Activated CD4-positive, alpha-beta T cell treated with anti-CD3 and anti-CD28 coated beads for 36 hours (primary cell): ENCODE measurements at regions of chr7 and their contacts with region 1.

Region 1: DNA sequence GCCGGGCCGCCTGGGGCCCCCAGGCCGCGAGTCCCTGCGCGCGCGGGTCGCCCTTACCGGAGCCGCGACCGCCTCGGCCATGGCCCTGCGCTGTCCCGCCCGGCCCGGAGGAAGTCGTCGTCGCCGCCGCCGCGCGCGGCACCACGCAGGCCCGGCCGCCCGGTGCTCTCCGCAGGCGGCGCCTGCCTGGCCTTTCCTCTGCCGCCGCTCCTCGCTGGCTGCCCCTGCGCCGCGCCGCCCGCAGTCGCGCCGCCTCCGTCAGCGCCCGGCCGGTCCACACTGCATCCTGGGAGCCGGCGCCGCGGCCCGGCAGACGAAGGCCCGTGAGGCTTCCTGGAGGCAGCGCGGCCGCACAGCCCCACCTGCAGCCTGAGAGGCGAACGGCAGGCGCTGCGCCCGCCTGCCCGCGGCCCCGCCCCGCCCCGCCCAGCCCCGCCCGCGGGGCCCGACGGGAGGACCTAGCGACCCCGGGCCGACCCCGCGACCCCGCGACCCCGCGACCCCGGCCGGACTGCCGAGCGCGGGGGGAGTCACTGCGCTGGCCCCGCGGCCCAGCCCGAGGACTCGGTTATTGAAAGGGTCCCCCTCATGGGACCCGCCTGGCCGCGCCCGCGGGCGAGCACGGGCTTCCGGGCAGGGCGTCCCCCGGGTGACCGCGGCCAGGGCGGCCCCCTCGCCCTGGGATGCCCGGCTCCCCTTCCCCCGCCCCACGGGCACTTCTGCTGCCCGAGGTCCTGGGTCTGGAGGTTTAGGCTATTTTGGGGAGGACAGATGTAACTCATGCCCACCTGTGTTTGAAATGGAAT is at the start of gene ZNF746:
- DNase-seq: peak; percentile 91
- ATAC-seq: peak; percentile 93
- H3K4me3 Mint-ChIP-seq: peak within 1 kb of the TSS; percentile 93
- H3K27ac Mint-ChIP-seq: peak within 1 kb of the TSS; percentile 91
- H3K4me1 Mint-ChIP-seq: peaks cover 28% of the 10 kb centered on the region
- H3K27me3 Mint-ChIP-seq: no peaks in the 10 kb centered on the region
- total RNA-seq, gene ZNF746: 14.2 to 15.2 TPM

Region 2: GRCh38 chr7:149090397-149091195 is 407.1 kb before region 1 on chr7 and contains the start of gene ZNF786:
- CTCF ChIA-PET with region 1: no interaction called
- POLR2A ChIA-PET with region 1: no interaction called
- intact Hi-C with region 1: loop called in 1 of 2 experiments (anchors 1 kb)
- DNase-seq: peak; percentile 97
- ATAC-seq: peak; percentile 87
- H3K4me3 Mint-ChIP-seq: peak within 1 kb of the TSS; percentile 89
- H3K27ac Mint-ChIP-seq: peak within 1 kb of the TSS; percentile 100
- H3K4me1 Mint-ChIP-seq: peaks cover 19% of the 10 kb centered on the region
- H3K27me3 Mint-ChIP-seq: no peaks in the 10 kb centered on the region
- total RNA-seq, gene ZNF786: 4.4 to 4.8 TPM

Region 3: DNA sequence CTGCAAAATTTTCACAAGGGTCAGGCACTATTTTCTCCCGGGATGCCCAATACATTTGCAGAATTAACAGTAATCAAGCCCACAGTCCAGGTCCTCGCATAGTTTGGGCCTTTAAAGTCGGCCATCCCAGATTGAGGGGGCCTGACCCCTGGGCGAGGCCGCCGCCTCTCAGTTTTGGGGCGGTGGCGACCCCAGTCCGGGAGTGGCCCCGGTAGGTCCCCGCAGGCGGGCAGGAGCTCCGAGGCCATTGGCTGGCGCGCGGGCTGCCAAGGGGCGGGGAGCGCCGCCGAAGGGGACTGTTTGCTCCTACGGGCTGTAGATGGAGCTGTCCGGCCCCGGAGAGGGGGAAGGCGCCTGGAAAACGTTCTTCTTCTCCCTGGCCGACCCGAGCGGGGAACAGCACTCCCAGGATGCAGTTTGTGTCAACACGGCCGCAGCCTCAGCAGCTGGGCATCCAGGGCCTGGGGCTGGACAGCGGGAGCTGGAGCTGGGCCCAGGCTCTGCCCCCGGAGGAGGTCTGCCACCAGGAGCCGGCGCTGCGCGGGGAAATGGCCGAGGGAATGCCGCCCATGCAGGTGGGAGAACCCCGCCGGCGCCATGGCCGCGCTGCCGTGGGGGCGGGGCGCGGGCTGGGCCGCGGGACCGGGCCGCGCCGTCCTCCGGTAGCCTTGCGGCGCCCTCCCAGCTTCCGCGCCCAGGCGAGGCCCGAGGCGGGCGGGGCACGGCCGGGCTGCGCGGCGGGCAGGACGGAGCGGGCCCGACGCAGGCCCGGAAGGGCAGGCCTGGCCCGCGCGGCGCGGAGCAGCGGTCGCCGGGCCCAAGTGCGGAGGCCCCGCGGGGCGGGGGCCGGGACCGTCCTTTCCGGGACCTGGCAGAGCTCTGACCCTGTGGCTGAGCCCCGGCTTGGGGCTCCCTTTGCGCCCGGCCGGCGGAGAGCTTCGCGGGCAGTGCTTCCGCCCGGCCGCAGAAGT is 302.2 kb before region 1 on chr7 and contains the start of gene ZNF282:
- CTCF ChIA-PET with region 1: interaction called, 3 read pairs
- POLR2A ChIA-PET with region 1: no interaction called
- intact Hi-C with region 1: loop called in 1 of 2 experiments (anchors 5 kb)
- DNase-seq: peak; percentile 89
- ATAC-seq: peak; percentile 91
- H3K4me3 Mint-ChIP-seq: peak within 1 kb of the TSS; percentile 95
- H3K27ac Mint-ChIP-seq: peak within 1 kb of the TSS; percentile 94
- H3K4me1 Mint-ChIP-seq: peaks cover 42% of the 10 kb centered on the region
- H3K27me3 Mint-ChIP-seq: no peaks in the 10 kb centered on the region
- total RNA-seq, gene ZNF282: 41.1 to 46.3 TPM

Region 4: GRCh38 chr7:149261829-149262617 is 235.6 kb before region 1 on chr7 and contains the start of gene ZNF783:
- CTCF ChIA-PET with region 1: no interaction called
- POLR2A ChIA-PET with region 1: no interaction called
- intact Hi-C with region 1: loop called in 1 of 2 experiments (anchors 1 kb)
- DNase-seq: peak; percentile 92
- ATAC-seq: peak; percentile 84
- H3K4me3 Mint-ChIP-seq: peak within 1 kb of the TSS; percentile 74
- H3K27ac Mint-ChIP-seq: peak within 1 kb of the TSS; percentile 96
- H3K4me1 Mint-ChIP-seq: peaks cover 40% of the 10 kb centered on the region
- H3K27me3 Mint-ChIP-seq: no peaks in the 10 kb centered on the region
- total RNA-seq, gene ZNF783: 14.5 to 15.4 TPM

Region 5: DNA sequence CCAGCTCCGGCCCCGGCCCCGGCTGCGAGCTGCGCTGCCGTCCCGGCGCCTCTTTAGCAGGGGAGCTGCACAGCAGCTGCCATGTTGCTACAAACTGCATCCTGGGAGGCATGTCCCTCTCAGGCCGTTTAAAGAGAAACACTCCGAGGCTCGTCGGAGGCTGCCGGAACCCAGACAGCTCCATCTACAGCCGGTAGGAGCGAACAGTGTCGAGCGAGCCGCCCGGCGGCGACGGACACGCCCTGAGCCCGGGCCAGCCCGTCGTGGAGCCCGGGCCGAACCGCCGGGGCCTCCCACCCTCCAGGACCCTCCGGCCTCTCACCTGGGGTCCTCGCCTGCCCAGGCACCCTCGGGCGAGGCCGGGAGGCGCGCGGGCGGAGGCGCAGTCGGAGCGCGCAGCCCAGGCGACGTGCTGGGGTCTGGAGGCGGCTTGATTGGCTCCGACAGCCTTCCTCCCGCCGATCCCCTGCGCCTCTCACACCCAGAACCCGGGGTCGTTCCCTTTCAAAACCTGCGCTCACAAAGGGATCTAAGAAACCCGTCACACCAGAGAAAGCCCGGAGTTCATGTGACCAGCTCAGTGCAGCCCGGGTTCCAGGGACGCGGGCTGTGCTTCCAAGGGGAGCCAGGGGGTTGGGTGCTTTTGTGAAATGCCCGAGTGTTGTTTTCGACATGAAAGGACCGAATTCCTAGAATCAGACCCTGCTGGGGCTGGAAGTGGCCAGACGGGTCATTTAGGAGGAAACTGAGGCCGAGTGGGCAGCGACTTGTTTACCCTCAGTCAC is 37.0 kb before region 1 on chr7 and contains the start of gene ZNF777:
- CTCF ChIA-PET with region 1: interaction called, 4 read pairs
- POLR2A ChIA-PET with region 1: interaction called, 4 read pairs
- intact Hi-C with region 1: loop called (anchors 1 to 5 kb)
- DNase-seq: peak; percentile 90
- ATAC-seq: peak; percentile 96
- H3K4me3 Mint-ChIP-seq: peak within 1 kb of the TSS; percentile 84
- H3K27ac Mint-ChIP-seq: peak within 1 kb of the TSS; percentile 87
- H3K4me1 Mint-ChIP-seq: peaks cover 21% of the 10 kb centered on the region
- H3K27me3 Mint-ChIP-seq: peaks cover 10% of the 10 kb centered on the region
- total RNA-seq, gene ZNF777: 13.3 to 16.4 TPM

Region 6: DNA sequence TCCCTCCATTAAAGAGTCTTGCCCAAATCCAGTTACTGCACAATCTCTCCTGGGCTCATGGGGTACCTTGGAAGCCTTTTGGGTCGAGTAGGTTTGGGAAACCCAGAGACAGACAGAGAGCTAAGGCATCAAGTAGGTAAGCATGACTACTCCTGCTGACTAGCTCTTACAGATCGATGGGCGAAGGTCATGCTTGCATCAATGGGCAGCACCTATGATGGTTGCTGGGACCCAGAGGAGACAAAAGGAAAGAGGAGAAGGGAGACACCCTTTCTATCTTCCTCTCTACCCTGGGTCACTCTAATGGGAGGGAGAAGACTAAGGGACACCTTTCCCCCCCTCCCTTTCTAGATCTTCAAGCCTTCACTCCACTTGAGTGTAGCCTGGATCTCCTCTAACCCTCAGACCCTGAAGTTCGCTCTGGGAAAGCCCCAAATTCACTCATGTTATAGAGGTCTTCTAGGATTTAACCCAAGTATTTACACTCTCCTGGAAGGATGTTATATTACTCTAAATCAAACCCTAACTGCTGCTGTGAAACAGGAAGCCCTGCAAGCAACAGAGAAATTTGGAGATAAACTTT is 31.6 kb after region 1 on chr7:
- CTCF ChIA-PET with region 1: no interaction called
- POLR2A ChIA-PET with region 1: no interaction called
- intact Hi-C with region 1: no loop called
- DNase-seq: peak; percentile 11
- ATAC-seq: no peak
- H3K4me3 Mint-ChIP-seq: no peak overlapping the region
- H3K27ac Mint-ChIP-seq: no peak overlapping the region
- H3K4me1 Mint-ChIP-seq: no peaks in the 10 kb centered on the region
- H3K27me3 Mint-ChIP-seq: no peaks in the 10 kb centered on the region

Region 7: DNA sequence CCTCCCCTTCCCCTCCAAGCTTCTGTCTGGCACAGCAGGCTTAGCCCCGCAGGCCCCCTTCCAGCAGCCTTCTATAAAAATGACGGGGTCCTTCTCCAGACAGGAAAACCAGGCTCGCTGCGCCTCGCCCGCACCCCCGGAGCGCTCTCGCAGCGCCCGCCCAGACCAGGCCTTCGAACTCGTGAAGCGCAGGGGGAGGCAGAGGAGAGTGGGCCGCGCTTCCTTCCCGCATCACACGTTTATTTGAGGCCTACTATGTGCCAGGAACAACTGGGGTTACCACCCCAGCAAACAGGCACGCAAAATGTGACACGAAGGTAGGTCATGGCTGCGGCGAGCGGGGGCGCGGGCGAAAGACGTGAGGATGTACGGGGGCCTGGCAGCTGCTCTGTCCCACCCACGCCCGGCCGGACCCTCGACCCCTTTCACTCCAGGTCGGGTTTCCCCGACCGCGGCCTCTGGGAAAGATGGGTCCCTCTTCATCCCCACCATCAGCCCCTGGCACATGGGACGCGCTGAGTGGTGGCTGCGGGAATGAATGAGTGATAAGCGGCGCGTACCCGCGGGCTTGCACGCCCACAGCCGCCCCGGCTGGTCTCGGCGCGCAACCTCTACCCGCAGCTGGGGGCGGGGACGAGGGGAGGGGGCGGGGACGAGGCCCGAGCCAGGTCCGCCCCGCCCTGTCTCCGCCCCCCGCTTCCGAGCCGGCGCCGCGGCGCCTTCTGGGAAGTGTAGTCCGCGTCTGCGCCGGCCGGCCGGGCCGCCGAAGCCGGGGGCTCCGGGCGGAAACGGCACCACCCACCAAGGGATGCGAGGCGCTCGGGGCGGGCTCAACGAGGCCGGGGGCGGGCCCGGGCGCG is 216.6 kb after region 1 on chr7:
- CTCF ChIA-PET with region 1: no interaction called
- POLR2A ChIA-PET with region 1: no interaction called
- intact Hi-C with region 1: loop called in 1 of 2 experiments (anchors 1 kb)
- DNase-seq: peak; percentile 97
- ATAC-seq: peak; percentile 89
- H3K4me3 Mint-ChIP-seq: peak overlapping the region; percentile 82
- H3K27ac Mint-ChIP-seq: peak overlapping the region; percentile 78
- H3K4me1 Mint-ChIP-seq: peaks cover 27% of the 10 kb centered on the region
- H3K27me3 Mint-ChIP-seq: no peaks in the 10 kb centered on the region